GM12878 (cell line): ENCODE measurements at regions of chr3 and their contacts with region 1.

Region 1: DNA sequence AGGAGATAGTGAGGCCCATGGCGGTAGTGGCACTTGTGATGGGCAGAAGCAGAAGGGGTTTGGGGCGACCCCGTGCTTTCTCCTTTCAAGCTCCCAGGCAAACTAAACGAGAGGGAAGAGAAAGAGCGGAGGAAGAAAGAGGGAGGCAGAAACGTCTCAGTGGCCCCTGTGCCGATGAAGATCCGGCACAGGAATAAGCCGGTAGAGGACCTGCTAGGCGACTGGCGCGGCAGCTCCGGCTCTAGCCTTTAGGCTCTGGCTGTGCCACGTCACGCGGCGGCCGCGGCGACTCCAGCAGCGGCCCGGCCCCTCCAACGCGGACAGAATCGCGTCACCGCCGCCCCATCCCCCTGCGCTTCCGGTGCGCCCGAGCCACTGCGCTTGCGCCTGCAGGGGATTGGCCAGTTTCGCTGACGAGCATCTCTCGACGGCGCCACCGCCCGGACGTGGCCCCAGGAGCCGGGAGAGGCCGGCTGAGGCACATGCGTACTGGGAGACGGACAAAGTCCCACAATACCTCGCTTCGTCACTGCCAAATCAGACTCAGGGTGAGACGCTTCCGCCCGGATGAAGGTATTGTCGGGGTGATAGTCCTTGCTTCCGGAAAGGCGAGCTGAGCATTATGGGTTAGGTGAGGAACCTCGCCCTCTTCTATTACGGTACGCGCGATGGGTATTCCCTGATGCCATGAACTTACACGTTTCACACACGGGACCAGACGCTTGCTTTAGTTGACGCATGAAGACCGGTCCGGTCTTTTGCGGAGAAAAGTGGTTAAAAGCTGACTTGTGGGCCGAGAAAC is at the start of gene ARF4:
- DNase-seq: peak; percentile 99
- ATAC-seq: peak; percentile 92
- H3K4me3 ChIP-seq: peak within 1 kb of the TSS; percentile 91
- H3K27ac ChIP-seq: peak within 1 kb of the TSS; percentile 95
- H3K4me1 ChIP-seq: no peaks in the 10 kb centered on the region; the same call in 1 of the 2 replicates
- H3K27me3 ChIP-seq: no peaks in the 10 kb centered on the region
- CTCF ChIP-seq: peak in 2 of 3 experiments; percentile 7 to 20; a peak in 1 of 6 replicates
- EP300 ChIP-seq: peak in 1 of 2 experiments; percentile 63; a peak in 2 of 4 replicates
- POLR2A ChIP-seq: peak; percentile 83
- RAD21 ChIP-seq: no peak
- polyA plus RNA-seq, gene ARF4: 166 to 283 TPM

Region 2: GRCh38 chr3:57555738-57556458 is 41.4 kb before region 1 on chr3 and contains the start of gene PDE12:
- CTCF ChIA-PET with region 1: interaction called, 6 read pairs
- POLR2A ChIA-PET with region 1: interaction called, 36 read pairs
- RAD21 ChIA-PET with region 1: interaction called, 22 read pairs
- SMC1A ChIA-PET with region 1: interaction called, 14 read pairs
- in situ Hi-C with region 1: no loop called
- intact Hi-C with region 1: loop called (anchors 2 kb)
- DNase-seq: peak; percentile 95
- ATAC-seq: peak; percentile 92
- H3K4me3 ChIP-seq: peak within 1 kb of the TSS; percentile 76
- H3K27ac ChIP-seq: peak within 1 kb of the TSS; percentile 99
- H3K4me1 ChIP-seq: no peaks in the 10 kb centered on the region; the same call in none of the 2 replicates
- H3K27me3 ChIP-seq: no peaks in the 10 kb centered on the region
- CTCF ChIP-seq: no peak
- EP300 ChIP-seq: peak in 1 of 2 experiments; percentile 100; a peak in 3 of 4 replicates
- POLR2A ChIP-seq: peak; percentile 98
- RAD21 ChIP-seq: no peak
- polyA plus RNA-seq, gene PDE12: 3.0 to 10.1 TPM

Region 3: GRCh38 chr3:57675530-57675929 is 78.2 kb after region 1 on chr3:
- CTCF ChIA-PET with region 1: interaction called, 4 read pairs
- POLR2A ChIA-PET with region 1: interaction called, 4 read pairs
- RAD21 ChIA-PET with region 1: interaction called, 10 read pairs
- SMC1A ChIA-PET with region 1: interaction called, 4 read pairs
- in situ Hi-C with region 1: no loop called
- intact Hi-C with region 1: loop called (anchors 5 kb)
- DNase-seq: no peak
- ATAC-seq: peak; percentile 47
- H3K4me3 ChIP-seq: no peak overlapping the region
- H3K27ac ChIP-seq: no peak overlapping the region
- H3K4me1 ChIP-seq: peaks cover 13% of the 10 kb centered on the region
- H3K27me3 ChIP-seq: no peaks in the 10 kb centered on the region
- CTCF ChIP-seq: no peak
- EP300 ChIP-seq: no peak
- POLR2A ChIP-seq: no peak
- RAD21 ChIP-seq: no peak